Vagina (tissue), 2 donors: ENCODE measurements at regions of chrX and their contacts with region 1.

Region 1: DNA sequence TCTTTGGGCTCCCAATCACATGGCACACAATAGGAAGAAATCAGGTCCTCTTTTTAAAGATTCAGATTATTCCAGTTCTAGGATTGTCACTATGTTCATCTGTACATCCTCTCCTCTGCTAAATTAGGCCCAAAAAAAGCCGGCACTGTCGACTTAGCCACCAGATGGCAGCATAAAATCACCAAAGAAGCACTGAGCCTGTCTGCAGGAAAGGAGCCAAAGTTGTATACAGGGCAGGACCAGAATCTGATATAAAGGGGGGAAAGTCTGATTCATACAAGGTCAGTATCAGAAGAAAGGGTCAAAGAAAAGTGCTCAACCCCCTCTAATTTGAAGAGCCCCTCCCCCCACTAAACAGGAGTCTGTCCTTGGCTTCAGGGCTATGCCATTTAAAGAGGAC is 292.5 kb downstream of the CHIC1 start:
- DNase-seq: no peak
- H3K4me3 ChIP-seq: no peak overlapping the region
- H3K27ac ChIP-seq: no peak overlapping the region
- H3K4me1 ChIP-seq: no peaks in the 10 kb centered on the region
- H3K27me3 ChIP-seq: no peaks in the 10 kb centered on the region
- CTCF ChIP-seq: peak; percentile 36 to 78 (median 61)
- POLR2A ChIP-seq: no peak

Region 2: DNA sequence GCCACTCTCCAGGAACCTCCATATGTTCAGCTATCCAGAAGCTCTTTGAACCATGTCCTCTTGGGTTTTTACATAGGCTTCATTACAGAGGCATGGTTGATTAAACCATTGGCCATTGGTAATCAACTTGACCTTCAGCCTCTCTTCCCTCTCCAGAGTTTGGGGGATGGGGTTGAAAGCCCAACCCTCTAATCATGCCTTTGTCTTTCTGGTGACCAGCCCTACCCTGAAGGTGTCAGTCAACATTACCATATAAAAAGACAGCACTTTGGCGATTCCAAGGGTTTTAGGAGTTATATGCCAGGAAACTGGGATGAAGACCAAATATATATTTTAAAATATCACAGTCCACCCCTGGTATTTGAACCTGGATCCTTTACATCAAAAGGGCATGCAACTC is 70.1 kb before region 1 on chrX:
- intact Hi-C with region 1: no loop called
- DNase-seq: no peak
- H3K4me3 ChIP-seq: no peak overlapping the region
- H3K27ac ChIP-seq: no peak overlapping the region
- H3K4me1 ChIP-seq: no peaks in the 10 kb centered on the region
- H3K27me3 ChIP-seq: no peaks in the 10 kb centered on the region
- CTCF ChIP-seq: no peak
- POLR2A ChIP-seq: no peak

Region 3: DNA sequence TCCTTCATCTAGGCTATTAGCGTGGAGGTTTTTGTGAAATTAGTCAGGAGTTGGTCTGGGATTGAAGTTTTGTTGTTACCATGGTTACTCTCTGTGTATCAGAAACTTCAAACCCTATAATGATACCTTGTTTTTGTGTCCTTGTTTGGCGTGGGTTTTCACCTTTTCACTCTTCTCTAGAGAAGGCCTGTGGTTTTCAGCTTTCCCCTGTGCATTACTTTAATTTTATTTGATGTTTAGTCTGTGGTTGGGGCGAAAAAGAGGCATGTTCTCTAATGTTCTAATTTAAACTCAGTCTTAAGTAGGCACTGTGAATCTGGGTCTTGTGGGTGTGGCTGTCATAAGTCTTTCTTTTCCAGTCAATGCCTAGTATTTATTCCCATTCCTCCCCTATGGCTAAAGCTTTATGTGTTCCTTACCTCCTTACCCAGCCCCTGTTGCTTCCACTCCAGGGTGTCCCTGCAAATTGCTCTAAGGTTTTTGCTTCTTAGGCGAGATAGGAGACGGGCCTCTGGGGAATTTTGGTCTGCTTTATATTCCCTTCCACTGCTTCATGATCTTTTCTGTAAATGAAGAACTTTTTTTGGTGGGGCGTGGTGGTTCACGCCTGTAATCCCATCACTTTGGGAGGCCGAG is 122.1 kb after region 1 on chrX:
- intact Hi-C with region 1: no loop called
- DNase-seq: no peak
- H3K4me3 ChIP-seq: no peak overlapping the region
- H3K27ac ChIP-seq: no peak overlapping the region
- H3K4me1 ChIP-seq: no peaks in the 10 kb centered on the region
- H3K27me3 ChIP-seq: no peaks in the 10 kb centered on the region
- CTCF ChIP-seq: no peak
- POLR2A ChIP-seq: no peak

Region 4: DNA sequence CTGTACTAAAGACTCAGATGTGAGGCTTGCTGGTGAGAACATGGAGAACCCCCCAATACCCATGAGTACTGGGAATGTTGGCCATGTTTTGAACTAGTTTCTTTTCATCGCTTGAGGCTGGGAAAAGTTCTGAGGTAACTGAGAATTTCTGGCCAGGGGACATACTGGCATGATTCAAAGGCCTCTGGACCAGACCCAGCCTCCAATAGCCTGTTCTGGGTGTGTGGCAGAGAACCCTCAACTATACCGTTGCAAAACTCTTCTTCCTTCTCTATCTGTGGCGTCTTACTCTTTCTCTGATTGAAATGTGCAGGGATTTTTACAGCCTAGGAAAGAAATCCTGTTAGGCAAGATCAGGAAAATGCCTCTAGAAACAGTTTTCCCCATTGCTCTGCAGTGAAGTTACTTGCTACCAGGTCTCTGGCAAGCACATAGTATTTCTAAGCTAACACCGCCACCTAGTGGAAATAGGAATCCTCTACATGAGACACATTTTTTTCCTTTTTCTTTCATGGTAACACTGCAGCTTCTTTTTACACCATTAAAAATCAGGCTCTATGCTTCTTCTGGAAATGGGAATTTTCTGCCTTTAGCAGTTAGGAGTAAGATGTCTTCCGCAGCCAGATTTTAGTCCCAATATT is 277.7 kb after region 1 on chrX:
- intact Hi-C with region 1: loop called (anchors 10 kb)
- DNase-seq: no peak
- H3K4me3 ChIP-seq: no peak overlapping the region
- H3K27ac ChIP-seq: peak overlapping the region; percentile 33
- H3K4me1 ChIP-seq: no peaks in the 10 kb centered on the region
- H3K27me3 ChIP-seq: no peaks in the 10 kb centered on the region
- CTCF ChIP-seq: peak; percentile 54 to 76 (median 60)
- POLR2A ChIP-seq: no peak

Region 5: DNA sequence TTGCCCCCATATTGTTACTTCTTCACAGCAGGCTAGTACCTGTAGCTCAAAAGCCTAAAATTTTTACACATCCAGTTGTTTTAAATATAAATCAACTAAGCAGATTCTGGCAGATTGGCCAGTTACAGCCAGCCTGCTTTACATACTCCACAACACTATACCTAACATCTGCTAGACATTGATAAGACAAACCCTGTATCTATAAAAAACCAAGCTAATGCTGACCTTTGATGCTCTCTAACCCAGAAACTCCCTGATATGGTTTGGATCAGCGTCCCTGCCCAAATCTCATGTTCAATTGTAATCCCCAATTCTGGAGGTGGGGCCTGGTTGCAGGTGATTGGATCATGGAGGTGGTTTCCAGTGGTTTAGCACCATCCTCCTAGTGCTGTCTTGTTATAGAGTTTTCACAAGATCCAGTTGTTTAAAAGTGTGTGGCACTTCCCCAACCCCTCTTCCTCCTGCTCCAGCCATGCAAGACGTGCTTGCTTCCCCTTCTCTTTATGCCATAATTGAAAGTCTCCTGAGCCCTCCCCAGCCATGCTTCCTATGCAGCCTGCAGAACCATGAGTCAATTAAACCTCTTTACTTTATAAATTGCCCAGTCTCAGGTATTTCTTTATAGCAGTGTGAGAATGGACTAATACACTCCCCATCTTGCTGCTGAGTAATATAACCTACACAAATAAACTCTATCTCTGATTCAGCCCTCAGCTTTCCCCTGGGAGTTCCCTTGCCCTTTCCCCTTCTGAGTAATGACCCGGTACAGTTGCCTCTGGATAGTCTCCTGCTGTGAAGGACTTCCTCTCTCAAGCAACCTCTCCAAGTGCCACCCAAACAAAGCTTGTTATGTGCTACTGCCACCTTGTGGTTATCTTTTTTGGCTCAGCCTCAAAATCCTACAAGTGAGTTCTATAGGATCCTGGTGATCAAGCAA is 488.1 kb after region 1 on chrX:
- intact Hi-C with region 1: loop called (anchors 10 kb)
- DNase-seq: no peak
- H3K4me3 ChIP-seq: no peak overlapping the region
- H3K27ac ChIP-seq: no peak overlapping the region
- H3K4me1 ChIP-seq: no peaks in the 10 kb centered on the region
- H3K27me3 ChIP-seq: no peaks in the 10 kb centered on the region
- CTCF ChIP-seq: peak; percentile 20 to 39 (median 28)
- POLR2A ChIP-seq: no peak

Region 6: DNA sequence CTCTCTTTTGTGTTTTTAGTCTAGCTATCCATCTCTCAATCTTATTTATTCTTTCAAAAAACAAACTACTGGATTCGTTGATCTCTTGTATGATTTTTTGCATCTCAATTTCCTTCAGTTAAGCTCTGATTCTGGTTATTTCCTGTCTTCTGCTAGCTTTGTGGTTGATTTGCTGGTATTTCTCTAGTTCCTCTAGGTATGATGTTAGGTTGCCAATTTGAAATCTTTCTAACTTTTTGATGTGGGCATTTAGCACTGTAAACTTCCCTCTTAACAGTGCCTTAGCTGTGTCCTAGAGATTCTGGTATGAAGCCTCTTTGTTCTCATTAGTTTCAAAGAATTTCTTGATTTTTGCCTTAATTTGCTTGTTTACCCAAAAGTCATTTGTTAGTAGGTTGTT is 1084.9 kb after region 1 on chrX:
- intact Hi-C with region 1: no loop called
- DNase-seq: no peak
- H3K4me3 ChIP-seq: no peak overlapping the region
- H3K27ac ChIP-seq: no peak overlapping the region
- H3K4me1 ChIP-seq: no peaks in the 10 kb centered on the region
- H3K27me3 ChIP-seq: no peaks in the 10 kb centered on the region
- CTCF ChIP-seq: no peak
- POLR2A ChIP-seq: no peak